CD8-positive, alpha-beta T cell (primary cell): ENCODE measurements at regions of chr14 and their contacts with region 1.

Region 1: DNA sequence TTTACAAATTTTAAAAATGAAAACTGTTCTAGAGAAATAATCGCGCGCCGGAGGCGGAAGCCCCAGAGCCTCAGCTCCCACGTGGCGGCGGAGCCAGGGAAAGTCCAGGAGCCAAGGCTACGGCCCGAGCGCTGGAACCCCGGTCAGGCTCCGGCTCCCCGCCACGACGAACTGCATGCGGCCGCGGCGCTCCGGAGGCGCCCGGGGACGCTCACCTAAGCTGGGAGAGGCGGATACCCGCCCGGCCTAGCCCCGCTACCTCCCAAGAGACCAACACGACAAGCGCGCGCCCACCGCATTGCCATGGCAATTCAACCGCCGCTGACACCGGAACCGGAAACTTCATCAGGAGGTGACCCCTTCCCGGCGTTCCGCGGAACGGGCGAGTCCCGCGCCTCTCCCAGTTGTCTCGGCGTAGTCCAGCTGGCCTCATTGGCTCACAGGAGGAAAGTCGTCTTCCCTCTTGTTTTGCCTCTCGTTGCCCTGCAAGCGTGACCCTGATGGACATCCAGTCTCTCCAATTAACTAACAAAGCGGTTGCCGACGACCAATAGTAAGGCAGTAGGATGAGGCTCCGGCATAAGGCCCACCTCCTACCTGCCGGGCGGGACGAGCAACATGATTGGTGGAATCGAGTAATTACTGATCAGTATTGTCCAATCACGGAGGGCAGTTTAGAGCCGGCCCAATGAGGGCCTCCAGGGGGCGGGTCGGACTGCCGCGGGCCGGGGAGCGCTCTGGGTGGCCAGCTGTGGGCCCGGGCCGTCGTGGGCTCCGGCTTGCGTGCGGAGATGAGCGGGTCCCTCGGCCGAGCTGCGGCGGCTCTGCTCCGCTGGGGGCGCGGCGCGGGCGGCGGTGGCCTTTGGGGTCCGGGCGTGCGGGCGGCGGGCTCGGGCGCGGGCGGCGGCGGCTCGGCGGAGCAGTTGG is at the start of gene GLRX5:
- DNase-seq: peak; percentile 94 to 100 (median 97)
- ATAC-seq: peak; percentile 85
- H3K4me3 ChIP-seq: peak within 1 kb of the TSS; percentile 68 to 76
- H3K4me3 Mint-ChIP-seq: peak within 1 kb of the TSS; percentile 90
- H3K27ac ChIP-seq: peak within 1 kb of the TSS; percentile 77 to 92
- H3K27ac Mint-ChIP-seq: peak within 1 kb of the TSS; percentile 95
- H3K4me1 ChIP-seq: peaks cover 46% of the 10 kb centered on the region
- H3K4me1 Mint-ChIP-seq: peaks cover 71% of the 10 kb centered on the region
- H3K27me3 ChIP-seq: no peaks in the 10 kb centered on the region
- H3K27me3 Mint-ChIP-seq: no peaks in the 10 kb centered on the region
- CTCF ChIP-seq: no peak
- total RNA-seq, gene GLRX5: 13.7 to 15.2 TPM

Region 2: DNA sequence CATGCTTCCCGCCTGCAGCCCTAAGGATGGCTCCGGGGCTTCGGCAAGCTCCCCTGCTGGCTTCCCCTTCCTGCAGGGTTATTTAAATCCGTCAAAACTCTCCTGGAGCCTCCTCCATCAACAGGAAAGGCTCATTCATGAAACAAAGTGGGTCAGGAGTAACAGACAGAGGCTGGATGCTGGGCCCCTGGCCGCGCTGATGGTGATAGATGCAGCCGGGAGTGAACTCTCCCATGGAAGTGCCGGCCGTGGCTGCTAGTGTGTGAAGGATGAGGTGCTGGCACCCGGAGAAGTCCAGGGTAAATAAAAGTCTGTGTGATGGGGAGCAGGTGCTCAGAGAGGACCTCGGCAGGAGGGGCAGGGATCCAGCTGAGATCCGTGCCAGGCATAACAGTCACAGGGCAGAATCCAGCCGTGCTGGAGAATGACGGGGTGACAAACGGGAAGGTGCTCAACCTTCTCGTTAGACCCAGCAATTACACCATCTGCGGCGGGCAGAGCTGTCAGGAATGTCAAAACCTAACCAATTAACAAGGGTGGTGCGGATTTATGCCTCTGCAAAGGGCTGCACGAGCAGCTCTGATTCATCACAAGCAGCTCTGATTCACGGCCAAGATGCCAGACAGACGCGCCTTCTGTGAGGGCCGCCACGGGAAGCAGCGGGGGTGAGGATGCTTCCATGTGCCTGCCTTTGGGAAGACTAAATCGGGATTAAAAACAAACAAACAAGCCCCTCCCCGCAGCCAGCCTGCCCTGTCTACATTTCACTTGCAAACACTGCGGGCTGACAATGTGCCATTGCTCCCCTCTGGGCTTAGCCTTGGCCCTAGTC is 73.7 kb before region 1 on chr14:
- CTCF ChIA-PET with region 1: interaction called, 532 read pairs
- POLR2A ChIA-PET with region 1: interaction called, 13 read pairs
- intact Hi-C with region 1: loop called (anchors 2 kb)
- DNase-seq: no peak
- ATAC-seq: no peak
- H3K4me3 ChIP-seq: no peak overlapping the region
- H3K4me3 Mint-ChIP-seq: no peak overlapping the region
- H3K27ac ChIP-seq: no peak overlapping the region
- H3K27ac Mint-ChIP-seq: peak overlapping the region; percentile 98
- H3K4me1 ChIP-seq: peaks cover 46% of the 10 kb centered on the region
- H3K4me1 Mint-ChIP-seq: peaks cover 48% of the 10 kb centered on the region
- H3K27me3 ChIP-seq: no peaks in the 10 kb centered on the region
- H3K27me3 Mint-ChIP-seq: no peaks in the 10 kb centered on the region
- CTCF ChIP-seq: no peak

Region 3: DNA sequence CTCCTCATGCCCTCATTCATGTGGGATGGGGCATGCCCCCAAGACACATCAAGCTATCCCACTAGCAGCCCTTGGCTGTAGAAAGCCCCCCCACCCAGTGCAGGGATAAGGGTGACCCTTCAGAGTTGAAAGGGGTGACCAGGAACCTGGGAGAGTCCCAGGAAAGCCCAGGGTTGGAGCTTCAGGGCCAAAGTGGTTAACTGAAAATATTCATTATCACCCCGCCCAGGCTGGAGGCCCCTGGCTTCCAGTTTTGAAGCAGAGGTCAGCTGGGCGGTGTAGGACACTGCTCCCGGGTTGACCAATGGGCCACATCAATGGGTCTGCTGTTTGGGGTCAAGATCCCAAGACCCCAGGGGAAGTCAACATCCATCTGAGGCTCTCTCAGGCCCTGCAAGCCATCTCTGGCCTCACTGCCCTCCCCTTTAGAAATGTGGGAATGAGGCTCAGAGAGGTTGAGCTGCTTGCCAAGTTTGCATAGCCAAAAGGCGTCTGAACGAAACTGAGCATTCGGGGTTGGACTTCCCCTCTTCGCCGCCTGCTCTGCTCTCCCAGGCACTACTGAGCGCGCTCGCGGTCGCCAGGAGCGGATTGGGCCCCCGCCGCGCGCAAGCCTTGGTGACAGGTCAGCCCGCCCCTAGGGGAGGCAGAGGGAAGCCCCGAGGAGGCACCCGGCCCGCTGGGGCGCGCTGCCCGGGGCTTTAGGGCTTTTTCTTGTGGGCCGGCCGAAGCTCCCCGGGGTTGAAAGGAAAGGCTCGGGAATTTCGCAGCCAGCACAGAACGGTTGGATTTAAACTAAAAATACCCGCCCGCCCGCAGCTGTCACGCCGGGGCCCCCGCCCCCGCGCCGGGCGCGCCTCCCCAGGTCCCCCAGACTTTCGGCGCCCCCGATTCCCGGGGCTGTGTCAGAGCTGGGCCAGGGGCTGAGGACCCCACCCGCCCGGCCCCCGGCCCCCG is 18.7 kb before region 1 on chr14:
- CTCF ChIA-PET with region 1: interaction called, 5 read pairs
- POLR2A ChIA-PET with region 1: interaction called, 12 read pairs
- intact Hi-C with region 1: loop called (anchors 1 kb)
- DNase-seq: peak; percentile 62 to 94 (median 84)
- ATAC-seq: peak; percentile 85
- H3K4me3 ChIP-seq: peak overlapping the region; percentile 65 to 79
- H3K4me3 Mint-ChIP-seq: peak overlapping the region; percentile 89
- H3K27ac ChIP-seq: peak overlapping the region; percentile 59 to 64
- H3K27ac Mint-ChIP-seq: peak overlapping the region; percentile 93
- H3K4me1 ChIP-seq: peaks cover 66% of the 10 kb centered on the region
- H3K4me1 Mint-ChIP-seq: peaks cover 70% of the 10 kb centered on the region
- H3K27me3 ChIP-seq: no peaks in the 10 kb centered on the region
- H3K27me3 Mint-ChIP-seq: no peaks in the 10 kb centered on the region
- CTCF ChIP-seq: peak; percentile 46

Region 4: DNA sequence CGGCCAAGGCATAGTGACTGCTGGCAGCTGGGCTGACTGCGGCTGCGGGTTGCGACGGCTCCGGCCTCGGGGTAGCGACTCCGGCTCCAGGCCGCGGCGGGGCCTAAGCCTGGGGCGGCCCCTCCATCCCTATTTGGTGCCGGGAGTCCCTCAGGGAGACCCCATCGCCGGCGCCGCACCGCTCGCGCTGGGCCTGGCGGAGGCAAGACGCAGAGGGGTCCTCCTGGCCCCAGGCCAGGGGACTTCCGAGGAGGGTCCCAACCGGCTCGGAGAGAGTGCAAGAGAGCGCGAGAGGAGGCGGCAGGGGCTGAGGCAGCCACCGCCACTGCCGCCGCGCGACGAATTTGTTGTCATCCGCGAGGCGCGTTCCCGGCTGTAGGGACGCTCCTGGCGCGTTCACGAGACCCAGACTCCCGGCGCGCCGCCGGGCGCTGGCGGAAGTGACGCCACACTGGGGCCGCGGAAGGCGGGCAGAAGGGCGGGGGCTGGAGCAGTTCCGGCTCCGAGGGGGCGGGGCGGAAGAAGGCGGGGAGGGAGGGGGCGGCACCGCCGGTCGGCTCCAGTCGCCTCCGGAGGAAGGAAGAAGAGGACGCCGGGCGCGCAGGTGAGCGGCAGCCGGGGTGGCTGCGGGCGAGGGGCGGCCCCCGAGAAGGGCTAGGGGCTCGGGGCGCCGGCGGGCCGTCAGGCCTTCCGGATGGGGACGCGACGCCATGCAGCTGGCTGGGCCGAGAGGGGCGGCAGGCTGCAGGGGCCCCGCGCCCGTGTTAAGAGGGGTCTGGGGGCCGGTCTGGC is 828.6 kb after region 1 on chr14 and contains the starts of genes ATG2B and GSKIP:
- CTCF ChIA-PET with region 1: no interaction called
- POLR2A ChIA-PET with region 1: no interaction called
- intact Hi-C with region 1: loop called in 1 of 2 experiments (anchors 5 kb)
- DNase-seq: peak; percentile 95 to 99 (median 98)
- ATAC-seq: peak; percentile 84
- H3K4me3 ChIP-seq: peak within 1 kb of the TSS; percentile 87 to 97
- H3K4me3 Mint-ChIP-seq: peak within 1 kb of the TSS; percentile 89
- H3K27ac ChIP-seq: peak within 1 kb of the TSS; percentile 89 to 93
- H3K27ac Mint-ChIP-seq: peak within 1 kb of the TSS; percentile 89
- H3K4me1 ChIP-seq: peaks cover 28% of the 10 kb centered on the region
- H3K4me1 Mint-ChIP-seq: peaks cover 59% of the 10 kb centered on the region
- H3K27me3 ChIP-seq: no peaks in the 10 kb centered on the region
- H3K27me3 Mint-ChIP-seq: no peaks in the 10 kb centered on the region
- CTCF ChIP-seq: no peak
- total RNA-seq, gene ATG2B: 16.0 to 17.9 TPM
- total RNA-seq, gene GSKIP: 9.4 to 13.5 TPM

Region 5: GRCh38 chr14:96391293-96392118 is 856.9 kb after region 1 on chr14:
- CTCF ChIA-PET with region 1: no interaction called
- POLR2A ChIA-PET with region 1: no interaction called
- intact Hi-C with region 1: loop called in 1 of 2 experiments (anchors 10 kb)
- DNase-seq: peak; percentile 97 to 100 (median 100)
- ATAC-seq: peak; percentile 94
- H3K4me3 ChIP-seq: peak overlapping the region; percentile 92
- H3K4me3 Mint-ChIP-seq: peak overlapping the region; percentile 90
- H3K27ac ChIP-seq: peak overlapping the region; percentile 57 to 64
- H3K27ac Mint-ChIP-seq: peak overlapping the region; percentile 49
- H3K4me1 ChIP-seq: peaks cover 12% of the 10 kb centered on the region
- H3K4me1 Mint-ChIP-seq: peaks cover 12% of the 10 kb centered on the region
- H3K27me3 ChIP-seq: no peaks in the 10 kb centered on the region
- H3K27me3 Mint-ChIP-seq: no peaks in the 10 kb centered on the region
- CTCF ChIP-seq: no peak

Region 6: GRCh38 chr14:96501742-96502617 is 967.4 kb after region 1 on chr14 and contains the start of gene PAPOLA:
- CTCF ChIA-PET with region 1: no interaction called
- POLR2A ChIA-PET with region 1: no interaction called
- intact Hi-C with region 1: loop called in 1 of 2 experiments (anchors 10 kb)
- DNase-seq: peak; percentile 88 to 98 (median 95)
- ATAC-seq: peak; percentile 85
- H3K4me3 ChIP-seq: peak within 1 kb of the TSS; percentile 89 to 92
- H3K4me3 Mint-ChIP-seq: peak within 1 kb of the TSS; percentile 93
- H3K27ac ChIP-seq: peak within 1 kb of the TSS; percentile 81 to 95
- H3K27ac Mint-ChIP-seq: peak within 1 kb of the TSS; percentile 99
- H3K4me1 ChIP-seq: peaks cover 46% of the 10 kb centered on the region
- H3K4me1 Mint-ChIP-seq: peaks cover 49% of the 10 kb centered on the region
- H3K27me3 ChIP-seq: no peaks in the 10 kb centered on the region
- H3K27me3 Mint-ChIP-seq: peaks cover 4% of the 10 kb centered on the region
- CTCF ChIP-seq: no peak
- total RNA-seq, gene PAPOLA: 164 to 176 TPM